Activated T-helper 2 cell treated with anti-CD3 and anti-CD28 coated beads, Interferon-gamma antibody, Interleukin-2, Interleukin-4, amounts not matched to agents 10 μg/mL and 5 μg/mL and 100 μg/mL, durations not matched to agents 14 hours and 24 hours and 36 hours (primary cell): ENCODE measurements at regions of chr15 and their contacts with region 1.

Region 1: DNA sequence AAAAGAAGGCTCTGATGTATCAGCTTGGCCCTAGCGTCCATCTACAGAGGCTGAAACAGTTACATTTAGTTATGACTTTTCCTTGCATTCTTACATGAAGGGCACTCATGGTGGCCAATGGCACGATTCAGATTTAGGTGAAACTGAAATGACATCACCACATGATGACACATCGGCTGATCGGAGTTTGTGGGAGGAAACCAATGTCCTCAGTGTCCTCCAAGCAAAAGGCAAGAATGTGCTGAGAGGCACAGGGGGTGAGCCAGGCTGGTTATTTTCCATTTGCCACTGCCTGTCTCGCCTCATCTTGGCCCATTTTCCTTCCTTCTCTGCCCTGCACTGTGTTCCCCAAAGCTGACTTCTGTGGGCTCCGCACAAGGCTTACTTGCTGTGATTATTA is 34.4 kb downstream of the TARS3 start:
- DNase-seq: no peak
- H3K4me3 Mint-ChIP-seq: no peak overlapping the region
- H3K27ac Mint-ChIP-seq: no peak overlapping the region
- H3K4me1 Mint-ChIP-seq: peaks cover 30% of the 10 kb centered on the region
- H3K27me3 Mint-ChIP-seq: no peaks in the 10 kb centered on the region

Region 2: DNA sequence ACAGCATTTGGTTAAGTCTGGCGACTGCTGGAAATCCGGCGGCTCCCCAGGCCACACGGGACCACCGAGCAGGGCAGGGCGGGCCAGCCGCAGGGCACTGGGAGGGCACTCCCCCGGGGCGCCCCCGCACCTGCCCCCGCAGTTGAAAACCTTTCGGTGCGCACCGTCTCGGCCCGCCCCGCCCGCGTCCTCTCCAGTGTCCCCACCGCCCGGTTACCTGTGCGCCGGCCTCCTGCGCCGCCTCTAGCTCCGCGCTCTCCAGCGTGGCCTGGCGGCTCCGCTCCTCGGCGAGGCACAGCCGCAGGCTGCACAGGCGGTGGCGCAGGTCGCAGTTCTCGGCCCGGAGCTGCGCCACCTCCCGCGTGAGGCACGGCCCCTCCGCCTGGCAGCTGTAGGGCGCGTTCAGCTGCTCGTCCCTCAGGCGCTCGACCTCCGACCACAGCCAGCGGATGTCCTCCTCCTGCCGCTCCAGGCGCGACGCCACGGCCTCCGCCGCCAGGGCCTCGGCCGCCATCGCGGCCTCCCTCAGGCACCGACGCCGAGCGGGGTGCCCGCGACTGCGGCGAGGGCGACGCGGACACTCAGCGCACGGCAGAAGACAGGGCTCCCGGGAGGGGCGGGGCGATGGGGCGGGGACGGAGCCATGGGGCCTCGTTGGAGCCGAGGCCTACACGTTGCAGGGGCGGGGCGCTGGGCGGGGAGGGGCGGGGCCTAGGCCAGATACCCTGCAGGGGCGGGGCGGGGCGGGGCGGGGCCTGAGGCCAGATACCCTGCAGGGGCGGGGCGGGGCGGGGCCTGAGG is 34.2 kb after region 1 on chr15 and contains the start of gene TARS3:
- intact Hi-C with region 1: loop called (anchors 1 kb)
- DNase-seq: peak; percentile 84
- H3K4me3 Mint-ChIP-seq: peak within 1 kb of the TSS; percentile 84
- H3K27ac Mint-ChIP-seq: peak within 1 kb of the TSS; percentile 93
- H3K4me1 Mint-ChIP-seq: peaks cover 15% of the 10 kb centered on the region
- H3K27me3 Mint-ChIP-seq: no peaks in the 10 kb centered on the region
- total RNA-seq, gene TARS3: 14.1 and 14.5 TPM in 2 replicates